Stomach (tissue), 19 donors: ENCODE measurements at regions of chr2 and their contacts with region 1.

Region 1: GRCh38 chr2:142682528-142682927 is 194.9 kb upstream of the KYNU start:
- DNase-seq: no peak
- H3K4me3 ChIP-seq: no peak overlapping the region
- H3K27ac ChIP-seq: no peak overlapping the region
- H3K4me1 ChIP-seq: no peaks in the 10 kb centered on the region
- H3K27me3 ChIP-seq: no peaks in the 10 kb centered on the region
- CTCF ChIP-seq: no peak
- EP300 ChIP-seq: no peak
- POLR2A ChIP-seq: no peak

Region 2: GRCh38 chr2:142965443-142965842 is 282.9 kb after region 1 on chr2:
- intact Hi-C with region 1: loop called (anchors 10 kb)
- DNase-seq: no peak
- H3K4me3 ChIP-seq: no peak overlapping the region
- H3K27ac ChIP-seq: no peak overlapping the region
- H3K4me1 ChIP-seq: no peaks in the 10 kb centered on the region
- H3K27me3 ChIP-seq: no peaks in the 10 kb centered on the region
- CTCF ChIP-seq: no peak
- EP300 ChIP-seq: no peak
- POLR2A ChIP-seq: no peak